ENCODE measurements at regions of chr4 and their contacts with region 1.

Region 1: GRCh38 chr4:128863312-128864075 is 54.0 kb downstream of the JADE1 start:
- DNase-seq: peak; percentile 50
- CTCF ChIP-seq: peak; percentile 67

Region 2: GRCh38 chr4:128006592-128006991 is 856.9 kb before region 1 on chr4:
- CTCF ChIA-PET with region 1: no interaction called
- POLR2A ChIA-PET with region 1: no interaction called
- DNase-seq: no peak
- CTCF ChIP-seq: no peak

Region 3: DNA sequence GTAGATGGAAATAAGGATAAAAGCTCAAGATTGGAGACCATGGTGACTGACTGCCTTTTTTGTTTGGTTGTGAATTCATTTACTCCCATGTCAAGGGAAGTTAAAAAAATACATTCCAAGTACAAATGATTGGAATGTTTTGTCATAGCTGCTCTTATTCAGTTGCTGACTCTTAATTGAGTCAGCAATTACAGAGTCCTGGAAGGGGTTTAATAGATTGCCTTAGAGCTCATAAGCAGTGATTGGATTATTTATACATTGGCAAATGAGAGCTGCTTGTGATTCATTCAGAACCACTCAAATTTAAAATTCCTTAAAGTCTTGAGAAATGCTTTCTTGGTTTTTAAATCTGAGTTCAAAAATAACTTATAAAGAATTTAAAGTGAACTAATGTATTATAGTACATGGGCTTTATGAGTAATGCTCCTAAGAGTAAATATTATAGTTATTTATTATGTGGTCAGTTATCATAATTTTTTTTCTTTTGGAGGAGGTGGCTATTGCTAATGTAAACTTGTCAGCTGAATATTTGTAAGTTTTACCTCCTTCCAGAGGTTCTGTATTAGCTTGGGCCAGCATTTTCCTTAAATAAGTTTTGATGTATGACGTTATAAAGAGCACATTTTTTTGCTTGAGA is 40.4 kb before region 1 on chr4:
- CTCF ChIA-PET with region 1: interaction called, 12 read pairs
- POLR2A ChIA-PET with region 1: interaction called, 3 read pairs
- DNase-seq: no peak
- CTCF ChIP-seq: no peak

Region 4: GRCh38 chr4:128840711-128841318 is 22.7 kb before region 1 on chr4:
- CTCF ChIA-PET with region 1: interaction called, 16 read pairs
- POLR2A ChIA-PET with region 1: no interaction called
- DNase-seq: no peak
- CTCF ChIP-seq: no peak

Region 5: DNA sequence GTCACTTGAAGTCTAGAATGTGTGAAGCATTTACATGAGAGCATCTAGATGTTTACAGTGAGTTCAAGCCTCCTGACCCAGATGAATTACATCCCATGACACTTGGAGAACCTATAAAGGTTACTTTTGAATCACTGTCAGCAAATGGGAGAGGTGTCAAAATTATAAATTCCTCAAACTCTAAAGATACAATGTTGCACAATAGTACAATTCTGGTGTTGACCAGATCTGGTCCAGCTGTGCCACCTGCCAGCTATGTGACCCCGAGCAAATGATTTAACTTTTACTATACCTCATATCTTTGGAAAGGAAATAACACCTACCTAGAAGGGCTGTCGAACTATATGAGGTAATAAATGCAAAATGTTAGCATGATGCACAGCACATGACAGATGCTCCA is 15.8 kb after region 1 on chr4:
- CTCF ChIA-PET with region 1: interaction called, 20 read pairs
- POLR2A ChIA-PET with region 1: no interaction called
- DNase-seq: no peak
- CTCF ChIP-seq: no peak

Region 6: GRCh38 chr4:128913228-128913627 is 49.7 kb after region 1 on chr4:
- CTCF ChIA-PET with region 1: no interaction called
- POLR2A ChIA-PET with region 1: no interaction called
- DNase-seq: peak; percentile 15
- CTCF ChIP-seq: no peak

Region 7: GRCh38 chr4:128979934-128980333 is 116.4 kb after region 1 on chr4:
- CTCF ChIA-PET with region 1: no interaction called
- POLR2A ChIA-PET with region 1: no interaction called
- DNase-seq: no peak
- CTCF ChIP-seq: no peak

Region 8: GRCh38 chr4:129093191-129093920 is 229.9 kb after region 1 on chr4 and contains the start of gene SCLT1:
- CTCF ChIA-PET with region 1: interaction called, 11 read pairs
- POLR2A ChIA-PET with region 1: interaction called, 3 read pairs
- DNase-seq: peak; percentile 93
- CTCF ChIP-seq: no peak

Region 9: DNA sequence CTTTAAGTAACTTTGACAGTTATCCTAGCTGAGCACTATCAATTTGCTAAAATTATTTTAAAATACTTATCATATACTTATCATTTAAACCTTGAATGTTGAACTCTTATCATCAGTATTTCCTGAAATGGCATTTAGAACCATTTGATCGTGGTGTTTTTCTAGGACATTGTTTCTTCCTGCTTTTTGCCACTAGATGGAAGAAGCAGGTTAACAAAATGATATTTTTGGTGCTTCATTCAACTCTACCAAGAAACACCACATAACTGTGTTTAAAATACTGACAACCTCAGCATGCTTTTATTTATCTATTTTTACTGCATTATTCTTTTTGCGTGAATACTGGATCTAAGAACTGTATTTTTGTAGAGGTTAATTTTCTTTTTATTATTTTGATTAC is 277.0 kb after region 1 on chr4:
- CTCF ChIA-PET with region 1: no interaction called
- POLR2A ChIA-PET with region 1: no interaction called
- DNase-seq: no peak
- CTCF ChIP-seq: no peak

Measured in GM10248 (cell line).